ENCODE measurements at regions of chr19 and their contacts with region 1.

Region 1: DNA sequence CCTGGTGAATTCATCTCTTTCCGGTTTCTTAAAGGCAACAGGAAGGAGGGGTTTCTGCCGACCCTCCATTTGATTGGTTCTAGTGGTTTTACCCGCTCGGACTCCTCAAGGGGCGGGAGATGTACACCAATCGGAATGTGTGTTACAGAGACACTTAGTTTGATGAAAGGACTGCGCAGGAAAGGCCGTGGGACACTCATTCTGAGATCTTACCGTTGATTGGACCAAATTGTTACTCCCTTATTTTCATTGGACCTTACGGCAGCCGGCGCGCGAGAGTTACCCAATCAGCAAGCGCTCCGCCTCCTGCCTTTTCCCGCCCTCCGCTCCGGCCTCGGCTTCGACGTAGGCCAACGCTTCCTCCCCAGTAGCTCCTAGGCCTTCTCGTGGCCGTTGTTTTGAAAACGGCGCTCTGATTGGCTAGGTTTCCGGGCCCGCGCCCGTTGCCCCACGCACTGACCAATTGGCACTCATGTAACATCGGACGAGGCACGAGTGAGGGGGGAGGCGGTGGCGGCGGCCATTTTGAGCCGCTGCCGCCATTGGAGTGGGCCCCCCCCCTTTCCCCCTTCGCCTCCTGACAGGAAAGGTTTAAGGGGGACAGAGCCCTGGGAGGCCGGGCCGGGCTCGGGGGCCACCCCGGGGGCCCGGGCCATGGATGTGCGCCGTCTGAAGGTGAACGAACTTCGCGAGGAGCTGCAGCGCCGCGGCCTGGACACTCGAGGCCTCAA is at the start of gene HNRNPUL1:
- DNase-seq: peak; percentile 100
- H3K4me3 ChIP-seq: peak within 1 kb of the TSS; percentile 78 to 94
- H3K4me3 Mint-ChIP-seq: peak within 1 kb of the TSS; percentile 92 to 98 (median 97)
- H3K27ac ChIP-seq: peak within 1 kb of the TSS; percentile 99
- H3K27ac Mint-ChIP-seq: peak within 1 kb of the TSS; percentile 99 to 100 (median 100)
- H3K4me1 ChIP-seq: peaks cover 42% of the 10 kb centered on the region
- H3K4me1 Mint-ChIP-seq: peaks cover 29 to 60% (median 37%) of the 10 kb centered on the region in 4 donors
- H3K27me3 ChIP-seq: no peaks in the 10 kb centered on the region
- H3K27me3 Mint-ChIP-seq: peaks cover 0 to 4% of the 10 kb centered on the region in 2 donors
- total RNA-seq, gene HNRNPUL1: 300 TPM

Region 2: DNA sequence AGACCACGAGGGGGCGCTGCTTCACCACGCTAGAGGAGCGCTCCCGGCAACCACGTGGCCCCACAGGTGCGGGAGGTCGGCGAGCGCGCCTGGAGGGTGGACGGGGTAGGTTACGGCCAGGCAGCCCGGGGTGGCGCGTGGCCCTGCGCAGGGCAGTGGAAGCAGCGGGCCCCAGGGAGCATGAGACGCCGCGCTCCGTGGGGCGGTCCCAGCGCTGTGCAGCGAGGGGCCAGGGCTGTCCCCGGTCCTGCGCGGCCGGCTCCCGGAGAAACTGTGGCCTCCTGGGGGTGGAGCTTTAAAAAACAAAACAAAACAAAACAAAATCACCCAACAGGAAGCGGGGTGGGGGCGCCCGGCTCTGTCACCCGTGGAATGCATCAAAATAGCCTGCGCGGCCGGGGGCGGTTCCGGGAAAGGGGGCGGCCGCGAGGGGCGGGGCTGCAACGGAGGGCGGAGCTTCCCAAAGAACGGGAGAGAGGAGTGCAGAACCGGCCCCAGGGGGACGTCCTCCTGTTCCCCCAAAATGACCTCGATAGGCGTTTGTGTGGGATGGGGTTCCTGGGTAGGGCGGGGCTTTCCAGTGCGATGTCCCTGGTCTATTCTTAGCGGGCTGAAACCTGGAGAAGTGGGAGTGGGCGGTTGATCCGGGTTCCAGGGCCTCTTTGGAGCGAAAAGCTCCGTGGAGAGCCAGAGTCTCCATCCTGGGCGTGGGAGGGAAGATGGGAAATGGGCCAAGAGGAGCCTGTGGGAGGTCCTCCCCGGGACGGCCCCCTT is 600.9 kb before region 1 on chr19:
- CTCF ChIA-PET with region 1: no interaction called
- POLR2A ChIA-PET with region 1: interaction called, 7 read pairs
- intact Hi-C with region 1: loop called (anchors 5 kb)
- DNase-seq: peak; percentile 87 to 94 (median 91)
- H3K4me3 ChIP-seq: peak overlapping the region; percentile 52 to 75
- H3K4me3 Mint-ChIP-seq: peak overlapping the region; percentile 82 to 90 (median 86)
- H3K27ac ChIP-seq: peak overlapping the region; percentile 49
- H3K27ac Mint-ChIP-seq: peak overlapping the region; percentile 74 to 95 (median 90)
- H3K4me1 ChIP-seq: peaks cover 16% of the 10 kb centered on the region
- H3K4me1 Mint-ChIP-seq: peaks cover 4 to 14% (median 6%) of the 10 kb centered on the region in 4 donors
- H3K27me3 ChIP-seq: no peaks in the 10 kb centered on the region
- H3K27me3 Mint-ChIP-seq: no peaks in the 10 kb centered on the region

Region 3: GRCh38 chr19:40798223-40798996 is 465.6 kb before region 1 on chr19:
- CTCF ChIA-PET with region 1: no interaction called
- POLR2A ChIA-PET with region 1: interaction called, 9 read pairs
- intact Hi-C with region 1: loop called (anchors 2 kb)
- DNase-seq: peak; percentile 100
- H3K4me3 ChIP-seq: peak overlapping the region; percentile 55 to 86
- H3K4me3 Mint-ChIP-seq: peak overlapping the region; percentile 92 to 99 (median 96)
- H3K27ac ChIP-seq: peak overlapping the region; percentile 82
- H3K27ac Mint-ChIP-seq: peak overlapping the region; percentile 98 to 100 (median 99)
- H3K4me1 ChIP-seq: peaks cover 47% of the 10 kb centered on the region
- H3K4me1 Mint-ChIP-seq: peaks cover 30 to 55% (median 41%) of the 10 kb centered on the region in 4 donors
- H3K27me3 ChIP-seq: no peaks in the 10 kb centered on the region
- H3K27me3 Mint-ChIP-seq: no peaks in the 10 kb centered on the region

Region 4: DNA sequence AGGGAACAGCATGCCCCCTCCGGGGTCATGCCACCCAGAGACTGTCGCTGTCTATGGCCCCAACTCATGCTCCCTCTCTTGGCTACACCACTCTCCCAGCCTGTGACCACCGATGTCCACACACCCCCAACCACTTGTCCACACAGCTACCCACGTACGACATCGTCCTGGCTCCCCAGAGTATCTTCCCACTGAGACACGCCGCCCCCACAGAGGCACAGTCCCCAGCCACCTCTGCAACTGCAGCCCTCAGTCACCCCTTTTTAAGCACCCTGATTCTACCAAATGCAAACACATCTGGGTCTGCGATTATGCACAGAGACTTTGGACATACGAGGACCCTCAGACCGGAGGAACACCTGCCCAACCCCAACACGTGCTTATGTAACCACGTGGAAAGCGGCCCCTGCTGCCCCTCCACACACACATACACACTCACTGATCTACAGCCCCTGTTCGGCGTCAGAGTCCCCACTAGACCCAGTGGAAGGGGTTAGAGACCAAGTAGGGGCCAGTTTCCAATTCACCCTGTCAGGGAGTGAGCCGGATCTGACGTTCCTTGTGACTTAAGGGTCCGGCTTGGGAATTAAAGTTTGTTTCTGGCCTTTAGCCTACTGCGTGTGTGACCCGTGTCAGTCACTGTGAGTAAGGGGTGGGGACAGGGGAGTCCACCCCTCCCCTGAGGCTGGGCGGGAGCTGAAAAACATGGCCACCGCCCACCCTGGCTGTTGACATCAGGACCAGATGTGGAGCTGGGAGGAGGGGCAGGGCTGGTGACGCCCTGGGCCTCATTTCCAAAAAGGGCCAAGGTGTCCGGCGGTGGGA is 56.9 kb before region 1 on chr19:
- CTCF ChIA-PET with region 1: interaction called, 103 read pairs
- POLR2A ChIA-PET with region 1: interaction called, 99 read pairs
- intact Hi-C with region 1: loop called (anchors 1 kb)
- DNase-seq: no peak
- H3K4me3 ChIP-seq: no peak overlapping the region
- H3K4me3 Mint-ChIP-seq: no peak overlapping the region
- H3K27ac ChIP-seq: no peak overlapping the region
- H3K27ac Mint-ChIP-seq: peak overlapping the region in 2 of 7 donors; percentile 76 to 78
- H3K4me1 ChIP-seq: no peaks in the 10 kb centered on the region
- H3K4me1 Mint-ChIP-seq: peaks cover 3 to 11% (median 9%) of the 10 kb centered on the region in 4 donors
- H3K27me3 ChIP-seq: no peaks in the 10 kb centered on the region
- H3K27me3 Mint-ChIP-seq: peaks cover 0 to 3% of the 10 kb centered on the region in 2 donors

Region 5: GRCh38 chr19:41310033-41310758 is 46.2 kb after region 1 on chr19 and contains the start of gene CCDC97:
- CTCF ChIA-PET with region 1: interaction called, 165 read pairs
- POLR2A ChIA-PET with region 1: interaction called, 711 read pairs
- intact Hi-C with region 1: loop called (anchors 1 kb)
- DNase-seq: peak; percentile 86 to 92 (median 89)
- H3K4me3 ChIP-seq: peak within 1 kb of the TSS; percentile 82 to 98
- H3K4me3 Mint-ChIP-seq: peak within 1 kb of the TSS; percentile 96 to 100 (median 97)
- H3K27ac ChIP-seq: peak within 1 kb of the TSS; percentile 92
- H3K27ac Mint-ChIP-seq: peak within 1 kb of the TSS; percentile 97 to 100 (median 99)
- H3K4me1 ChIP-seq: peaks cover 76% of the 10 kb centered on the region
- H3K4me1 Mint-ChIP-seq: peaks cover 43 to 87% (median 68%) of the 10 kb centered on the region in 4 donors
- H3K27me3 ChIP-seq: no peaks in the 10 kb centered on the region
- H3K27me3 Mint-ChIP-seq: no peaks in the 10 kb centered on the region
- total RNA-seq, gene CCDC97: 56.4 to 61.4 TPM

Region 6: GRCh38 chr19:41363753-41364523 is 99.9 kb after region 1 on chr19 and contains the start of gene B9D2:
- CTCF ChIA-PET with region 1: interaction called, 5 read pairs
- POLR2A ChIA-PET with region 1: interaction called, 217 read pairs
- intact Hi-C with region 1: loop called (anchors 1 kb)
- DNase-seq: peak; percentile 98 to 99 (median 99)
- H3K4me3 ChIP-seq: peak within 1 kb of the TSS; percentile 77 to 91
- H3K4me3 Mint-ChIP-seq: peak within 1 kb of the TSS; percentile 93 to 98 (median 95)
- H3K27ac ChIP-seq: peak within 1 kb of the TSS; percentile 99
- H3K27ac Mint-ChIP-seq: peak within 1 kb of the TSS; percentile 97 to 100 (median 100)
- H3K4me1 ChIP-seq: peaks cover 24% of the 10 kb centered on the region
- H3K4me1 Mint-ChIP-seq: peaks cover 15 to 45% (median 23%) of the 10 kb centered on the region in 4 donors
- H3K27me3 ChIP-seq: no peaks in the 10 kb centered on the region
- H3K27me3 Mint-ChIP-seq: no peaks in the 10 kb centered on the region
- total RNA-seq, gene B9D2: 11.6 to 15.2 TPM

Region 7: GRCh38 chr19:41531438-41532311 is 267.7 kb after region 1 on chr19:
- CTCF ChIA-PET with region 1: no interaction called
- POLR2A ChIA-PET with region 1: interaction called, 12 read pairs
- intact Hi-C with region 1: no loop called
- DNase-seq: peak; percentile 80 to 93 (median 88)
- H3K4me3 ChIP-seq: peak overlapping the region; percentile 30 to 37
- H3K4me3 Mint-ChIP-seq: peak overlapping the region; percentile 77 to 88 (median 86)
- H3K27ac ChIP-seq: peak overlapping the region; percentile 53
- H3K27ac Mint-ChIP-seq: peak overlapping the region; percentile 82 to 98 (median 94)
- H3K4me1 ChIP-seq: peaks cover 53% of the 10 kb centered on the region
- H3K4me1 Mint-ChIP-seq: peaks cover 33 to 60% (median 49%) of the 10 kb centered on the region in 4 donors
- H3K27me3 ChIP-seq: no peaks in the 10 kb centered on the region
- H3K27me3 Mint-ChIP-seq: peaks cover 1 to 3% of the 10 kb centered on the region in 2 donors

Region 8: GRCh38 chr19:41734617-41735016 is 470.6 kb after region 1 on chr19:
- CTCF ChIA-PET with region 1: no interaction called
- POLR2A ChIA-PET with region 1: no interaction called
- intact Hi-C with region 1: no loop called
- DNase-seq: no peak
- H3K4me3 ChIP-seq: no peak overlapping the region
- H3K4me3 Mint-ChIP-seq: no peak overlapping the region
- H3K27ac ChIP-seq: no peak overlapping the region
- H3K27ac Mint-ChIP-seq: no peak overlapping the region
- H3K4me1 ChIP-seq: no peaks in the 10 kb centered on the region
- H3K4me1 Mint-ChIP-seq: peaks cover 0 to 4% (median 0%) of the 10 kb centered on the region in 4 donors
- H3K27me3 ChIP-seq: no peaks in the 10 kb centered on the region
- H3K27me3 Mint-ChIP-seq: peaks cover 23 to 24% of the 10 kb centered on the region in 2 donors